Cardiac septum (tissue), 1 donor: ENCODE measurements at regions of chr10 and their contacts with region 1.

Region 1: DNA sequence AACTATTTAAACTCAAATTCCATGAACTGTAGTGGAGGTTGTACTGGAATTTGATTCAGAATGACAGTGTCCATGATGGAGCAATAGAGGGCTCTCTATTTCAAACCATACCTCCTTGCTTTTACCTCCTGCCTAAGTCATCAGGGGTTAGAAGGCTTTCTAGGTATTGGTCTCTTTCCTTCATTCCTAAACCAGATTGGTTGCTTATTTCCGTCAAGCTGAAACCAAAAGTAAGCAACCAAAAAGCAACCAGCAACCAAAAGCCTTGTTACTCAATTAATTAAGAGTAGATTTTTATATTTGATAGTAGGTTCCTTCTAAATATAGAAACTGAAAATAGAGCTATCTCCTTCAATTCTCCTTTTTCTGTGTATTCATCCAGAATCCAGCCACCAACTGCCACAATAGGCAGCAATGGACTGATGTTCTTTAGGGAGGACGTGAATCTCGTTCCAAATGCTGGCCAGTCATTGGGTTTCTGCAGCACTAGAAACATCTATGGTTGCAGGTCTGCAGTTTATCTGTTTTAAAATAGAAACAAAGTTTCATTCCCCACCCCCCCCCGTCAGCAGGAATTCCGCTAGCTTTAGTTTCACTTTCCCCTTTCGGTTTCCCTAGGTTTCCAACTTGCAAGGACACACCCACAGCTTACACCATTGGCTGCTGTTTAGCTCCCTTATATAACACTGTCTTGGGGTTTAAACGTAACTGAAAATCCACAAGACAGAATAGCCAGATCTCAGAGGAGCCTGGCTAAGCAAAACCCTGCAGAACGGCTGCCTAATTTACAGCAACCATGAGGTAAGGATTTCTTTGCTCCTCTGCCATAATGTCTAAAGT is at the start of gene IFIT1:
- DNase-seq: no peak
- total RNA-seq, gene IFIT1: 9.8 TPM

Region 2: DNA sequence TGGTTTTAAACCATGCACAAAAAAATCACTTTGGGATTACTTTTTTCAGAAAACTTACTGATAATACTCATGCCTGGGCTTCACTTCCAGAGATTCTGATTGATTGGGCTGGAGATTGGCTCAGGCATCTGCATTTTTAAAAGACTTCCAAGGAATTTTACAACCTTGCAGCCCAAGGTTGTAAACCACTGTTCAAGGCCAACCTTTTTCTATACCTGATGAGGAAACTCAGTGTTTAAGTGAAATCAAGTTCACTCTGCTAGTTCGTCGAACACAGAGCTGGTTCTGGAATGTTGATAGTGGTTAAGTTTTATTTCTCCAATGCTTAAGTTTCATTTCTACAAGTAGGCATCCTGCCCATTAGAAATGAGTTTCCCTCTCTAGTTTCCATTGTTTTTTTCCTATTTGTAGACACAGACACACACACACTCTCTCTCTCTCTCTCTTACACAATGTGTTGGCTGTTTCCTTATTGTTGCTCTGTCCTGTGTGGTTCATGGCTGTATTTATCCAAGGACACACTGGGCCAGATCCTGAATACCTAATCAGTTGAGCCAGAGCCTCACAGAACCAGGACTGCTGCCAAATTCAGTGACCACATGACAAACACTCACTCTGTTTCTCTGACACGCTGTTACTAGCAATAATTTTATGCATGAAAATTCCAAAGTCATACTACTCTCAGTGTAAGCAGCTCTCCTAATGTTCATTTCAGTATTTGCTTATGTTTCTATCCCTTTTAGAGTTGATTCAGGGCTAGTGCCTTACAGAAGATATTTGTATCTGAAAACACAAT is 18.0 kb before region 1 on chr10:
- intact Hi-C with region 1: loop called (anchors 1 kb)
- DNase-seq: peak; percentile 83

Region 3: GRCh38 chr10:89414146-89414878 is 22.2 kb after region 1 on chr10 and contains the start of gene IFIT5:
- intact Hi-C with region 1: loop called (anchors 2 kb)
- DNase-seq: peak; percentile 89
- total RNA-seq, gene IFIT5: 11.5 TPM

Region 4: GRCh38 chr10:89591111-89591795 is 199.1 kb after region 1 on chr10:
- intact Hi-C with region 1: no loop called
- DNase-seq: no peak